Naive thymus-derived CD4-positive, alpha-beta T cell (primary cell): ENCODE measurements at regions of chr9 and their contacts with region 1.

Region 1: DNA sequence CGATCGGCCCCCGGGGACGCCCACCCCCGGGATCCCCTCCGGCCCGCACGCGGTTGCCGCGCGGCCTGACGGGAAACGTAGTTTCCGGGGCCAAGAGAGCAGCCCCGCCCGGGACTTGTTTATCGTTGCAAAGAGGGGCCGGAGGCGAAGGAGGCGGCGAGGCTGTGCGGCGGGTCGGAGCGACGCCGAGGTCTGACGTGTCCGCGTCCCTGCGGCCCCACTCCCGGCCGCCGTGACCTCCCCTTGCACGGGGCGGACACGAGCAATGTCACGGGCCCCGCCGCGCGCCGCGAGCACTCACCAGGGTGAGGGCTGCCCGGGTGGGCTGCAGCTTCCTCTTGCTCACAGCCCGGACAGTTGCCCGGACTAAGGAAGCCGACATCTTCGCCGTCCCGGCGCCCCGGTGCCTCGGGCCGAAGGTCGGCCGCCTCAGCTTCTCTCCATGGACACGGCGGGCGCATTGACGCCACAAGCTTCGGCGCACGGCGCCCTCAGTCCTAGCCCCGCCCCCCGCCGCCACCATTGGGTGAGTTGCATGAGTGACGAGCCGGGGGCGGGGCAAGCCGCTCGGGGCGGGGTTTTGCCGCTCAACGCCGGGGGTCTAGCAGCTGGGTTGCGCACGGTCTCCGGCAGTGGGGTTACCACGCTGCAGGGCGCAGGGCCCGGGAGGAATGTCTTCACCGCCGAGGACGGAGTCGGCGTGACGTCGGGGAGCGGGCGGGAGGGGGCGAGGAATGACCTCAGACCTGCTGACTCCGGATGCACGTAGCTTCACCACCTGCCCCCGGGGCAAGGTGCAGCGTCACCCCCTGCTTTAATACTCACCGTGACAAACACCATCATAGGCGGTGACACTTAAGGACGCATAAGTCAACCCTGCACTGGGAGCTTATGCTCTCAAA is at the start of gene ISCA1:
- DNase-seq: peak; percentile 97 to 99 (median 97)
- ATAC-seq: peak; percentile 92
- H3K4me3 ChIP-seq: peak within 1 kb of the TSS; percentile 89
- H3K4me3 Mint-ChIP-seq: peak within 1 kb of the TSS; percentile 85 to 98 (median 94)
- H3K27ac ChIP-seq: peak within 1 kb of the TSS; percentile 99
- H3K27ac Mint-ChIP-seq: peak within 1 kb of the TSS; percentile 90 to 98 (median 96)
- H3K4me1 ChIP-seq: peaks cover 14 to 17% of the 10 kb centered on the region in 2 donors
- H3K4me1 Mint-ChIP-seq: peaks cover 30 to 53% (median 48%) of the 10 kb centered on the region in 7 donors
- H3K27me3 ChIP-seq: no peaks in the 10 kb centered on the region
- H3K27me3 Mint-ChIP-seq: no peaks in the 10 kb centered on the region
- total RNA-seq, gene ISCA1: 26.3 to 62.3 (median 38.4) TPM

Region 2: DNA sequence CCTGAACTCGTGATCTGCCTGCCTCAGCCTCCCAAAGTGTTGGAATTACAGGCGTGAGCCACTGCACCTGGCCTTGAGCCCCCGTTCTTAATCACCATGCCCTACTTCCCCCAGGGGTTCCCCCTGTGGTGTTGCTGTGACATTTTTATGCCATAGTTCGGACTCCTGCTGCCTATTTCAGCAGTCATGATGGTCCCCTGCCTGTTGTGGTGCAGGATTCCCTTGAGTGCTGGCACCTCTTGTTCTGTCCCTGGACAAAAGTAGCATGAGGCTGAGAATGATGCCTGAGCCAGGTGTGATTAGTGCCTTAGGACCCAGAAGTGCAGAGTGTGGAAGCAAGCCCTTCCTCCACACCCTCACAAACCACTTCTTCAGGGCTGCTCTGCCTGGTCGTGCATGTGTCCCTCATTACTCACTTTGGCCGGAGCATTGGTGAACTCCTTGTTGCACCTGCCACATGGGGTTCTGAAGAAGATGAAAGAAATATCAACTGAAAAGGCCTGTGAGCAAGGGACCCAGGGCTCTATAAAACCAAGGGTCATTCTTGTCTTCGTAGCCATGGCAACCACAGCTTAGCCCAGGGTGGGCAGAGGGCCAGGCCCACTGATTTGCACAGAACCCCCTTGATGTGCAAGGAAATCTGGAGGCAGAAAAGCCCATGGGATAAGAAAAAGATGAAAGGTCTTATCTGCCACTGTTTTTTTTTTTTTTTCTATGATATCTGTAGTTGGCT is 1384.8 kb before region 1 on chr9:
- CTCF ChIA-PET with region 1: no interaction called
- POLR2A ChIA-PET with region 1: no interaction called
- intact Hi-C with region 1: no loop called
- DNase-seq: no peak
- ATAC-seq: no peak
- H3K4me3 ChIP-seq: no peak overlapping the region
- H3K4me3 Mint-ChIP-seq: no peak overlapping the region
- H3K27ac ChIP-seq: no peak overlapping the region
- H3K27ac Mint-ChIP-seq: no peak overlapping the region
- H3K4me1 ChIP-seq: no peaks in the 10 kb centered on the region
- H3K4me1 Mint-ChIP-seq: no peaks in the 10 kb centered on the region
- H3K27me3 ChIP-seq: no peaks in the 10 kb centered on the region
- H3K27me3 Mint-ChIP-seq: peaks cover 0 to 11% (median 0%) of the 10 kb centered on the region in 5 donors

Region 3: DNA sequence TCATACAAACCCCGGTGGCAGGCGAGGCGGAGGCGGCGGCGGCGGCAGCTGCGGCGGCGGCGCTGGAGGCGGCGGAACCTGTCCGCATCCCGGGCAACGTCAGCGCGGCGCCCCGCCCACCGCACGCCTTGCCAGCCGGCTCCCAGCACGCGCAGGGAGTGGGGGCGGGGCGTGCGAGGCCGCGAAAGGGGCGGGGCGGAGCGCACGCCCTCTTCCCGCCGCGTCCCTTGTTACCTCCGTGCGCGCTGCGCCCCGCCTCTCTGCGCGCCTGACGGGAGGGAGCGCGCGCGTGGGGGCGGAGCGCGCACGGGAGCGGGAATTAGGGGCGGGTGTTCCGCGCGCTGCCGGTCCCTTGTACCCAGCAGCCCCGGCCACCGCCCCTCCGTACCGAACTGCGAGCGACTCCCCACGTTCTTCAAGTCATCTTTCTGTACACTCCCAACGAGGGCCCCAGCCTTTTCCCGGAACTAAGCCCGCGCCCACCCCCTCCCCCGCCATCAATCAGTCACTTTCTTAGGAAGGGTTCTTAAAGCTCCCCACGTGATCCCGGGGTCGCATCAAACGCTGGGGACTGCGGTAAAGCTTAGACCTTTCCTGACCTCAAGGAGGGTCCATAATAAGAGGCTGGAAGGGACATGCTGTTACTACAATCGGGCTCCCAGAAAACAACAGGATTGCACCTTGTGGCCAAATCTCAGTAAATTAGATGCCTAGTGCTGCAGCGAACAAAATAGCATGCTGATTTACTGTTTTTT is 540.3 kb before region 1 on chr9 and contains the start of gene AGTPBP1:
- CTCF ChIA-PET with region 1: no interaction called
- POLR2A ChIA-PET with region 1: interaction called, 3 read pairs
- intact Hi-C with region 1: loop called (anchors 1 to 2 kb)
- DNase-seq: peak; percentile 95 to 99 (median 97)
- ATAC-seq: peak; percentile 93
- H3K4me3 ChIP-seq: peak within 1 kb of the TSS; percentile 88
- H3K4me3 Mint-ChIP-seq: peak within 1 kb of the TSS; percentile 90 to 99 (median 95)
- H3K27ac ChIP-seq: peak within 1 kb of the TSS; percentile 93
- H3K27ac Mint-ChIP-seq: peak within 1 kb of the TSS; percentile 91 to 99 (median 95)
- H3K4me1 ChIP-seq: peaks cover 0 to 14% of the 10 kb centered on the region in 2 donors
- H3K4me1 Mint-ChIP-seq: peaks cover 14 to 48% (median 33%) of the 10 kb centered on the region in 7 donors
- H3K27me3 ChIP-seq: no peaks in the 10 kb centered on the region
- H3K27me3 Mint-ChIP-seq: peaks cover 0 to 18% (median 0%) of the 10 kb centered on the region in 5 donors
- total RNA-seq, gene AGTPBP1: 31.9 to 85.7 (median 59.6) TPM

Region 4: DNA sequence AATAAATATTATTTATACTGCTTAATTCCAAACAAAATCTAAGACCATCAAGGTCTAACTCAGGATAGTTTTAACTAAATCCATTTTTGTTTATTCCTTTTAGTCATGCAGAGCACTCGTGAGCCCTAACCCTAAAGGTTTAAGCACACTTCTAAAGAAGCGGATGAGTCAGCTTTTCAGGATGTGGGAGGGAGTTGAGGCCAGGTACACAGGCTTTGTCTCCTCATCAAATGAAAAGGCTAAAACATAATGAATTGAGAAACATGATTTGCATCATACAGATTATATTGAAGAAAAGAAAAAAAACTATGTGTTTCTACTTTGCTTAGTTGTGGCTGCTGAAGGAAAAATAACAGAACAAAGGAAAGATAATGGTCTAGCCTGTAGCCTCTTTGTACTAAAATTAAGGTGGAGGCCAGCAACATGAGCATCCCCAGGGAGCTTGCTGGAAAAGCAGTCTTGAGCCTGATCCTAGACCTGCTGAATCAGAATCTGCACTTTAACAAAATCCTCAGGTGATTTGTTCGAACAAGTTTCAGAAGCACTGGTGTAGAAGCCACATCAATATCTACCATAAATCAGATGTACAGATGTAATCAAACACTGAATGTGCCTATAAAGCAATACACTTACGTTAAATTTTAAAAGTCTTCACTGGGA is 21.1 kb after region 1 on chr9:
- CTCF ChIA-PET with region 1: no interaction called
- POLR2A ChIA-PET with region 1: interaction called, 5 read pairs
- intact Hi-C with region 1: loop called (anchors 1 to 2 kb)
- DNase-seq: peak in 7 of 9 donors; percentile 8 to 45 (median 33)
- ATAC-seq: peak; percentile 79
- H3K4me3 ChIP-seq: no peak overlapping the region
- H3K4me3 Mint-ChIP-seq: peak overlapping the region in 7 of 10 donors; percentile 5 to 72 (median 42)
- H3K27ac ChIP-seq: peak overlapping the region; percentile 34
- H3K27ac Mint-ChIP-seq: peak overlapping the region; percentile 37 to 87 (median 75)
- H3K4me1 ChIP-seq: no peaks in the 10 kb centered on the region
- H3K4me1 Mint-ChIP-seq: peaks cover 9 to 37% (median 26%) of the 10 kb centered on the region in 7 donors
- H3K27me3 ChIP-seq: no peaks in the 10 kb centered on the region
- H3K27me3 Mint-ChIP-seq: no peaks in the 10 kb centered on the region

Region 5: DNA sequence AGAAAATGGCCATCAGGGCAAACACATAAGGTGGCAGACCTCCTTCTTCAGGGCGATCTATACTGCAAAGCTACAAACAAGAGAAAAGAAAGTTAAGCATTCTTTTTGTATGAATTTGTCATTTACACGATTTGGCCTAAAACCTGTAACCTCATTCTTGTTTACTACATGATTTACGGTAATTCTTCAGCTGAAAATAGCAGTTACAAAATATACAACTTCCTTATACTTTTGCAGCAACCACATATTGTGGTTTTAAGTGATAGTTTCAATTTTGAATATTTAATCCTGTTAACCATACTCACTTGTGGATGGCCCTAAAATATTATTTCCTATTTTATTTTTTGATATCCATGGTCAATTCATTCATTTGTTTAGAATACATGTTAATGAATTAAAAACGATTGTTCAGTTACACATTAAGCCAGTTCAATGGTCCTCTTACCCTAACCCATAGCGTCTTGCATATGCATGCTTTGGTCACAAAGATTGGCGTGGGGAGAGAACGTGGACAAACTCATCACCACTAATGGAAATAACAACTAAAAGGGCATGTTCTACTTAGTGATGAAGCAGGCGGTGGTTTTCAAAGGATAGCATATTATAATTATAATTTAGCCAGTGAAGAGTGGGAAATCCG is 55.3 kb after region 1 on chr9:
- CTCF ChIA-PET with region 1: no interaction called
- POLR2A ChIA-PET with region 1: no interaction called
- intact Hi-C with region 1: loop called in 1 of 2 experiments (anchors 1 kb)
- DNase-seq: no peak
- ATAC-seq: peak; percentile 70
- H3K4me3 ChIP-seq: peak overlapping the region; percentile 46
- H3K4me3 Mint-ChIP-seq: peak overlapping the region in 9 of 10 donors; percentile 37 to 88 (median 85)
- H3K27ac ChIP-seq: no peak overlapping the region
- H3K27ac Mint-ChIP-seq: peak overlapping the region in 7 of 9 donors; percentile 31 to 81 (median 68)
- H3K4me1 ChIP-seq: peaks cover 0 to 16% of the 10 kb centered on the region in 2 donors
- H3K4me1 Mint-ChIP-seq: peaks cover 12 to 52% (median 25%) of the 10 kb centered on the region in 7 donors
- H3K27me3 ChIP-seq: no peaks in the 10 kb centered on the region
- H3K27me3 Mint-ChIP-seq: no peaks in the 10 kb centered on the region

Region 6: DNA sequence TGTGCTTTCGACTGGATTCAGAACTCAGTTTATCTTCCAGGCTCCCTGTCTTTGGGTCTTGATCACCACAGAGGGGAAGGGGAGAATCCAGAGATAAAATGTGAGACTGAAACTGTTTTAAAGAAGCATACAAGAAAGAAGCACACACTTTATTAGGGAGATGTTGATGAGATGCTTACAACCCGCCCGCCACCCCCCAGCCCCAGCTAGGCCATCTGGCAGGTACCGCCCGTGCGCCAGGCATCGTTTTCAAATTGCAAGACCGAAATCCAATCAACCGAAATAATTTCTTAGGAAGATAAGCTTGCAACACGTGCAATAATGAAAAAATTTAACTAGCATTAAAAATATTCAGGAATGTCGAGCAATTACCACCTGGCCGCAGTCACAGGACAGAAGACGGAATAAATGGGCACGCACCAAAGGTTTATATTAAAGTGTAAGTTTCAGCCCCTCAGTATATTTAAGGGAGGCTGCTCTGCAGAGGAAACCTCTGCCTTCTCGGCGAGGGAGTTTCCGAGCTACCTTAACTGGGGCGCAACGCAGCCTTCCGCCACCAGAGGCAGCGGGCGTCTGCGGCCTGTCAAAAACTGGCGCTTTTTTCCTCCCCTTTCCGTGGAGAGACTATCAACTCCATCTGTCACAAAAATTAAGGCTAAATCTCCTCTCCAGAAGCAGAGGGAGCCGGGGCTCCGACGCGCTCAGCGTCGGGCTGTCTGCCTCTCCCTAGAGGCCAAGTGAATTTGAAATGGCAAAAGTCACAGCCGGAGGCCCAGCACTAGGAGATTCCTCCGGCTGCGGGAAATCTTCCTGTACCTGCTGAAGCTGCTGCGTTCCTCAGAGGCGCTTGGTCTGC is 666.0 kb after region 1 on chr9:
- CTCF ChIA-PET with region 1: no interaction called
- POLR2A ChIA-PET with region 1: no interaction called
- intact Hi-C with region 1: loop called in 1 of 2 experiments (anchors 2 kb)
- DNase-seq: peak; percentile 50 to 70 (median 66)
- ATAC-seq: peak; percentile 80
- H3K4me3 ChIP-seq: peak overlapping the region; percentile 47
- H3K4me3 Mint-ChIP-seq: peak overlapping the region; percentile 80 to 95 (median 90)
- H3K27ac ChIP-seq: no peak overlapping the region
- H3K27ac Mint-ChIP-seq: peak overlapping the region in 5 of 9 donors; percentile 13 to 75 (median 52)
- H3K4me1 ChIP-seq: peaks cover 5 to 13% of the 10 kb centered on the region in 2 donors
- H3K4me1 Mint-ChIP-seq: peaks cover 7 to 26% (median 15%) of the 10 kb centered on the region in 7 donors
- H3K27me3 ChIP-seq: peaks cover 6 to 16% of the 10 kb centered on the region in 2 donors
- H3K27me3 Mint-ChIP-seq: peaks cover 12 to 35% (median 19%) of the 10 kb centered on the region in 5 donors